ENCODE measurements at regions of chr2 and their contacts with region 1.

Region 1: GRCh38 chr2:80499095-80499494 is 194.5 kb upstream of the LRRTM1 start:
- DNase-seq: peak; percentile 6
- ATAC-seq: no peak
- H3K4me3 ChIP-seq: no peak overlapping the region
- H3K27ac ChIP-seq: no peak overlapping the region
- H3K4me1 ChIP-seq: no peaks in the 10 kb centered on the region; a peak in 1 of 4 replicates
- H3K27me3 ChIP-seq: no peaks in the 10 kb centered on the region
- CTCF ChIP-seq: peak in 2 of 3 experiments; percentile 29 to 41; a peak in 3 of 6 replicates
- POLR2A ChIP-seq: no peak
- RAD21 ChIP-seq: peak; percentile 35; the same call in 1 of the 2 replicates

Region 2: GRCh38 chr2:80326214-80326613 is 172.9 kb before region 1 on chr2:
- CTCF ChIA-PET with region 1: interaction called, 14 read pairs
- POLR2A ChIA-PET with region 1: no interaction called
- RAD21 ChIA-PET with region 1: no interaction called
- intact Hi-C with region 1: loop called (anchors 2 kb)
- DNase-seq: no peak
- ATAC-seq: no peak
- H3K4me3 ChIP-seq: no peak overlapping the region
- H3K27ac ChIP-seq: no peak overlapping the region
- H3K4me1 ChIP-seq: no peaks in the 10 kb centered on the region
- H3K27me3 ChIP-seq: no peaks in the 10 kb centered on the region
- CTCF ChIP-seq: no peak
- POLR2A ChIP-seq: no peak
- RAD21 ChIP-seq: peak; percentile 17; the same call in 1 of the 2 replicates

Region 3: DNA sequence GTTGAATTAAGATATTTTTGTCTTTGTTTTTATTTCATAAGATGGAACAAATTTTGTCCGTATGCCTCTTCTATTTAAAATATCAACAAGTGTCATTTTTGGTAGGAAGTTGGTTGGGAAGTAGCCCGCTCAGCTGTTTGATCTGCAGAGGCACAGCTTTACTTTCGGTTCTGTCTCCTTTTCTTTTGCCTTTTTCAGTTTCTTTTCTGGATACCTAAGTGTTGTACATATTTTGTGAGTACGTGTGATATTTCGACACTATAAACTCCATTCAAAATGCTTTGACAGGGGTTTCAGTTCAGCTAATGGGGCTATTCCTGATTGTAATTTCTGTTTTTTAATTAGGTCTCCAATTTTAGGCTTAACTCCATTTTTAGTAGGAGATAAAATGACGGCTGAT is 1590.4 kb after region 1 on chr2:
- CTCF ChIA-PET with region 1: no interaction called
- POLR2A ChIA-PET with region 1: no interaction called
- RAD21 ChIA-PET with region 1: no interaction called
- intact Hi-C with region 1: no loop called
- DNase-seq: no peak
- ATAC-seq: no peak
- H3K4me3 ChIP-seq: no peak overlapping the region
- H3K27ac ChIP-seq: no peak overlapping the region
- H3K4me1 ChIP-seq: no peaks in the 10 kb centered on the region
- H3K27me3 ChIP-seq: no peaks in the 10 kb centered on the region
- CTCF ChIP-seq: no peak
- POLR2A ChIP-seq: no peak
- RAD21 ChIP-seq: no peak